PC-3 (cell line): ENCODE measurements at regions of chr2 and their contacts with region 1.

Region 1: DNA sequence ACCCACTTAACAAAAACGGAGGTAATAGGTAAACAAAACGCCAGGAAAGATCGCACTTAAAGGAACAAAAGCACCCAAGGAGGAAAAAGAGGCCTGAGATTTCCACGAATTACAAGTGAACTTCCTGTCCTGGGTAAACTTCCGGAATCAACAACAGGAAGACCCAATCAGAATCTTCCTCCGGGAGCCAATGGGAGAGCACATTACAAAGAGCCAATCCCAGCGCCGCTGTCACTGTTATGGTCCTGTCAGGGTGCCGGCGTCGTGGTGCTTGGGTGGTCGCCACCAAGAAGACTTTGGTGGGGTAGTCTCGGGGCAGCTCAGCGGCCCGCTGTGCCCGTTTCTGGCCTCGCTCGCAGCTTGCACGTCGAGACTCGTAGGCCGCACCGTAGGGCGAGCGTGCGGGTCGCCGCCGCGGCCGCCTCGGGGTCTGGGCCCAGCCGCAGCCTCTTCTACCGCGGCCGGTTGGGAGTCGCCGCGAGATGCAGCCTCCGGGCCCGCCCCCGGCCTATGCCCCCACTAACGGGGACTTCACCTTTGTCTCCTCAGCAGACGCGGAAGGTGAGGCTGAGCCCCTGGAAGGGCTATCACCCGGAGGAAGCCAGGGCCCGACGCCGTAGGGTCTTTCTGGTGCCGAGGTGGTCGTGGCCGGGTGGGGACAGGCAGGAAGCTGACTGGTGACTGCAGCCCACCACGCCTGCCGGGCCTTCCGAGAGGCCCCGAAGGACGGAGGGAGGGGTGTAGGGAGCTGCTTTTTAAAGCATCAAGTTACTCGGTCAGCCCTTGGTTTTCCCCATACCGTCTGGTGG is at the start of gene YIPF4:
- DNase-seq: peak; percentile 91
- ATAC-seq: peak; percentile 99
- H3K4me3 ChIP-seq: peak within 1 kb of the TSS; percentile 88
- H3K27ac ChIP-seq: no peak within 1 kb of the TSS; the same call in 1 of the 2 replicates
- H3K4me1 ChIP-seq: peaks cover 11% of the 10 kb centered on the region
- H3K27me3 ChIP-seq: no peaks in the 10 kb centered on the region
- CTCF ChIP-seq: no peak
- total RNA-seq, gene YIPF4: 9.6 and 13.1 TPM in 2 replicates

Region 2: GRCh38 chr2:32534831-32535230 is 257.0 kb after region 1 on chr2:
- CTCF ChIA-PET with region 1: no interaction called
- POLR2A ChIA-PET with region 1: interaction called, 11 read pairs
- intact Hi-C with region 1: no loop called
- DNase-seq: no peak
- ATAC-seq: no peak
- H3K4me3 ChIP-seq: no peak overlapping the region
- H3K27ac ChIP-seq: no peak overlapping the region
- H3K4me1 ChIP-seq: no peaks in the 10 kb centered on the region
- H3K27me3 ChIP-seq: no peaks in the 10 kb centered on the region
- CTCF ChIP-seq: no peak

Region 3: DNA sequence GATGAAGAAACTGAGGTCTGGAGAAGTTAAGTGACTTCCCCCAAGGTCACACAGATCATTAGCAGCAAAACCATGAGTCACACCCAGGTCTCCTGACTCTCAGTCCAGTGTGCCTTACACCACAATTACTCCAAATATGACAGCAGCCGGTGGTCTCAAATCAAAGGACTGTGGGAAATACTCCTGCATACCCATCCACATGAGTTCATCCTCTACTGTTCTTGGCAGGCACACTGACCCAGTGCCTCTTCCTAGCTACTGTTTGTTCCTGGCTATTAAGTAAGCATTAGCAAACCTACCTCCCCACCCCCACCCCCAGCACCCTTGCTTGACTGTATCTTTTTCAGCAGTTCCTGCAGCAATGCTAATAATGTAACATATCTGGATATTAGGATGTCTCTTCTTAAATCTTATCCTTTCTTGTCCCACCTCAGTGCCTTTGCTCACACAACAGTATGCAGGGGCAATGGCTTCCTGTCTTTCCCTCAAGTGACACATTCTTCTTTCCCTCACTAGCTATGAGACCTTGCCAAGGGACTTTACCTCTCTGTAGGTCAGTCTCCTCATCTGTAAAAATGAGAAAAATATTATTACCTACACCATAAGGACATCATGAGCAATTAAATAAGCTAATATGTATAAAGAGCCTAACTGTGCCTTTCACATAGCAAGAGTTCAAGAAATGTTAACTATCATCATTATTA is 1275.0 kb after region 1 on chr2:
- CTCF ChIA-PET with region 1: no interaction called
- POLR2A ChIA-PET with region 1: no interaction called
- intact Hi-C with region 1: no loop called
- DNase-seq: peak; percentile 43
- ATAC-seq: peak; percentile 67
- H3K4me3 ChIP-seq: no peak overlapping the region
- H3K27ac ChIP-seq: no peak overlapping the region
- H3K4me1 ChIP-seq: peaks cover 7% of the 10 kb centered on the region
- H3K27me3 ChIP-seq: no peaks in the 10 kb centered on the region
- CTCF ChIP-seq: no peak